Posterior cingulate gyrus (tissue), 11 donors: ENCODE measurements at regions of chr19 and their contacts with region 1.

Region 1: DNA sequence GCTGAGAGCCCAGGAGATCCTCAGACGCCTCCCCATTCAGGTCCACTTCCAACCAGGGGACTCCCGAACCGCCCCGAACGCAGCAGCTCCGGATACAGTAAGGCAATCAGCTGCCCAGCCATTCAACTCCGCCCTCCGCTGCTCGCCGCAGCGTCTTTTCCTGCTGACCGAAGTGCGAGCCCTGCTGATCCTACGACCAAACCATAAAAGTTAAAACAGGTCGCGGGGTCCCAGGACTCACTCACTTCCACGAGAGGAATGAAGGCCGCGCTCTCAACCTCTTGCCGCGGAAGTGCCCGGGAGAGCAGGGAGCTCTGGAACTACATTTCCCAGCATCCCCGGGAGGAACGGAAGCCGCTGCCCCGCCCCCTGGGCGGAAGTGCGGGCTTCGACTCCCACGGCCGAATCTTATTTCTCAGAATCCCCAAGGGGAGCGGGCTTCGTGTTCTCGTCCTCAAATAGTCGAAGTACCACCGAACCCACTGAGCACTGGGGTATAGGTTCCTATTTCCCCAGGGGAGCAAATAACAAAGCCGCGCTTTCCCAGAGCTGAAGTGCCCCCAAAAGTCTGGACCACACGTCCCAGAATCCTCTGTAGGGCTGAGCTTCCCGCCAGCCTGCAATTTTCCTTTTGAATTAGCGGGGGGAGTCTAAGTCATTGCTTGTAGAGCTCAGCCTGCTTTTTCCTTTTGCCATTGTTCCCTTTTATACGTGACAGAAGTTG is at the start of gene ZNF45:
- DNase-seq: peak; percentile 86 to 99 (median 91)

Region 2: GRCh38 chr19:43826787-43827754 is 108.1 kb before region 1 on chr19 and contains the start of gene ZNF283:
- intact Hi-C with region 1: loop called (anchors 10 kb)
- DNase-seq: peak; percentile 90 to 99 (median 92)

Region 3: GRCh38 chr19:43901395-43902390 is 33.5 kb before region 1 on chr19:
- intact Hi-C with region 1: loop called (anchors 1 kb)
- DNase-seq: peak; percentile 79 to 96 (median 86)

Region 4: GRCh38 chr19:43950834-43951645 is 15.9 kb after region 1 on chr19 and contains the start of gene ZNF221:
- intact Hi-C with region 1: loop called (anchors 1 kb)
- DNase-seq: peak; percentile 83 to 98 (median 88)

Region 5: DNA sequence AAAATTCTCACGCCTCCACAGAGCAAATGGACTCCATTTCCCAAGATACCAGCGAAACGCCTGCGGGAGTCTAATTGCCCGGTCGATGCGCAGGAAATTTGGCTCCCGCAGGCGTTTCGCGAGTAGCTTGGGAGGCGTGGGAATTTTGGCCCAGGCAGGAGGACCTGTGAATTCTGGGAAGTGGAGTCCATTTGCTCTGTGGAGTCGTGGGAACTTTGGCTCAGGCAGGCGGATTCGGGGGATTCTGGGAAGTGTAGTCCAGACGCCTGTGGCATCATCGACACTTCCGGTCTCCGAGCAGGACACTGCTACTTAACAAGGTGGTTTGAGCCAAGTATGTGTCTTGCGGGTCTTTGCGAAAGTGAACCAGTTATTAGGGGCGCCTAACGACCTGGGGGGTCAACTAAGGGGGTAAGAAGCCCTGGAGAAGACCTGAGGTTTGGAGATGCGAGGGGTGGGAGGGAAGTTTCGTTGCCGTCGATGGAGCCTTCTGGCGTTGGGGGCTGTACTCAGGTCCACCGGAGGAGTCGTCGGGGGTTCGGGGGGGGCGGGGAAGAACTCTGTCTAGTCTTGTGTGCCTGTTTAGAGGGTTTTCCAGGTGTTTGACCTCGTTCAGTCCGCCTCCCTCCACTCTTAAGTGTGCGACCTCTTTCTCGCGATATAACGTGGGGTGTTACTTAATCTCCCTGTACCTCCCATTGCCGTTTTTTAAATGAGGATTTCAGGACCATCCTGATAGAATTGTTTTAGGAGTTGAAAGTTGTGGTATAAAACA is 49.0 kb after region 1 on chr19 and contains the start of gene ZNF155:
- intact Hi-C with region 1: loop called (anchors 10 kb)
- DNase-seq: peak; percentile 87 to 98 (median 93)

Region 6: DNA sequence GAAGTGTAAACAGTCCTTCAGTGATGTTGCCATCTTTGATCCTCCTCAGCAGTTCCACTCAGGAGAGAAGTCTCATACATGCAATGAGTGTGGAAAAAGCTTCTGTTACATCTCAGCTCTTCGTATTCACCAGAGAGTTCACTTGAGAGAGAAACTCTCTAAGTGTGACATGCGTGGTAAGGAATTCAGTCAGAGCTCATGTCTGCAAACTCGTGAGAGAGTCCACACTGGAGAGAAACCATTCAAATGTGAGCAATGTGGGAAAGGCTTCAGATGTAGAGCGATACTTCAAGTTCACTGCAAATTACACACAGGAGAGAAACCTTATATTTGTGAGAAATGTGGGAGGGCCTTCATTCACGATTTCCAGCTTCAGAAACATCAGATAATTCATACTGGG is 75.3 kb after region 1 on chr19:
- intact Hi-C with region 1: no loop called
- DNase-seq: no peak